Aorta (tissue), 5 donors: ENCODE measurements at regions of chr5 and their contacts with region 1.

Region 1: GRCh38 chr5:173573126-173573960 is 43.1 kb downstream of the BOD1 start:
- DNase-seq: peak; percentile 81 to 94
- ATAC-seq: peak; percentile 91
- H3K4me3 ChIP-seq: no peak overlapping the region
- H3K27ac ChIP-seq: no peak overlapping the region
- H3K4me1 ChIP-seq: no peaks in the 10 kb centered on the region
- H3K27me3 ChIP-seq: no peaks in the 10 kb centered on the region

Region 2: DNA sequence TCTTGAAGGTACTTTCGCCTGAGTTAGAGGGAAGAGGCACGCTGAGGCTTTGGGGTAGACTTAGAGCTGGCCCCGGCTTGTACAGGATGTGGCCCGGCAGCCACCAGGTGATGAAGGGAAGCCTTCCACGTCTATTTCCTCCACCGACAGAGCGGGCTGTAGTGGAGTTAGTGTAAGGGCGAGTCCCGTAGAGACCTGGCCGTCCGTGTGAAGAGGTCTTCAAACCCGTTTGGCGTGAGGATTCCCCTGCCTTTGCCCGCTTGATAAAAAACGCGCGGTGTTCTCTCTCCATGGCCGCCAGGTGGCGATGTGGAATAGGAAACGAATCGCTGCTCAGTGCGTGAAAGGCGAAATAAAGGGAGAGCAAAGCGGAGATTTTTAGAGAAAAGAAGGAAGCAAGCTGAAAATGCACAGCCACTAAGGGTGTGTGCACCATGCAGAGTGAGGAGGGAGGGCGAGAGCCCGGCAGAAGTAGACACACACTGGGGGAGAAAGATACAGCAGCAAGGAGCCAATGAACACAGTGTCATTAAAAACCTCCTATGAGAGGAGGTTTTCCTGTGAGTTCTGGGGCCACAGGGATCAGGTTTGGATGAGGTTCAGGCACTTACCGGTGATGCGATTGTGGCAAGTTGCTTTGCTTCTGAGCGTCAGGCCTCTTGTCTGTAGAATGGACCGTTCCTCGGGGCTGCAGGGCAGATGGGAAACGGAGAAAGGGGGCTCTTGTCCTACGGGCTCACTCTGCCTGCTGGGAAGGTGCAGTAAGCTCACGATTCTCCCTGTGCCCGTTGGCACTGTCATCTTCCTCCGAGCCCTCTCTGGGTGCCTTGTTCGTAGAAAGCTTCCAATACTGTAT is 279.3 kb before region 1 on chr5:
- intact Hi-C with region 1: loop called (anchors 2 kb)
- DNase-seq: peak; percentile 81 to 92
- ATAC-seq: peak; percentile 86
- H3K4me3 ChIP-seq: no peak overlapping the region
- H3K27ac ChIP-seq: no peak overlapping the region
- H3K4me1 ChIP-seq: no peaks in the 10 kb centered on the region
- H3K27me3 ChIP-seq: no peaks in the 10 kb centered on the region

Region 3: DNA sequence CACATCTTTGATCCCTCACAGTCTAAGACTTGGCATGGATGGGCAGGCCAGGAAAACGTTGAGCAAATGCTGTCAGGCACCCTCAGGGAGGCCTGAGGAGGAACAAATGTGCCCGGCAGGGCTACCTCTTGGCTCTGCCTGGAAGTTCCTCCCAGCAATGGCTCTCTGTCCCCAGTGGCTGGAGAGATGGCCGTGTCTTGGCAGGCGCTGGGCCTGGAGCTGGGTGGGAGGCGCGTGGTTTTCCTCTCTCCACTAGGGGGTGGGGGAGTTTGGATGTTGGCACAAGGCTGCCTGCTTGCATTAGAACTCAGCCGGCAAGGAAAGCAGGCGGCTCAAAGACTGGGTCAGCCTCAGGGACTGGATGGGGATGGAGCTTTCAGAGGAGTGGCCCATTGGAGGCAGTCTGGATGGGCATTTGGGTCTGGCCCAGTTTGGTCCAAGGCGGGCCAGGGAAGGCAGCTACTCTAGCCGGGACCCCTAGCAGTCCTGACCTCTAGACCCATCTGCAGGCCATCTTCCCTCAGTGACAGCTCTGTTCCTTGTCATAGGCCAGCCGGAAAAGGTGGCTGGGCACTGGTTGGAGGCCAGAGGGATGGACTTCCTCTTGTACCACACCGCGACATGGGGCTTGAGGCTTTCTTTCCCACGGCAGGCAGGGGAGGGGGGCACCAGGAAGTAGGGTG is 176.9 kb before region 1 on chr5:
- intact Hi-C with region 1: loop called in 1 of 2 experiments (anchors 10 kb)
- DNase-seq: no peak
- ATAC-seq: no peak
- H3K4me3 ChIP-seq: no peak overlapping the region
- H3K27ac ChIP-seq: no peak overlapping the region
- H3K4me1 ChIP-seq: peaks cover 0 to 3% of the 10 kb centered on the region in 2 donors
- H3K27me3 ChIP-seq: no peaks in the 10 kb centered on the region

Region 4: DNA sequence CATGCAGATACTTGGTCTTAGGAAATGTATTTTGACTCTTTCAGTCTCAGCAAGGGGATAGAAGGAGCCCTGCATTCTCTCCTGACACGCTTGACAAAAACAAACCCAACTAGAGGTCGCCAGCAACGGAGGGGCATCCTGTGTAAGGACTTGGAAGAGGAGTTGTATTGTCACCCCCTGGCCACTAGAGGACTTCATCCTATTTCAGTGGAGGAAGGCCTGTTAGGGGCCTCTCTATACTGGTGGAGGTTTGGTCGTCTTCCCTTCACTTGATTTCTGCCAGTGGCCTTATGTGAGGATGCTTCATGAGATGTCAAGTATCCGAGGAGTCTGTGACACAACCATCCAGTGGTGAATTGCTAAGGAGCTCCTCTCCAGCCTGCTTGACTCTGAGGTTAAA is 122.3 kb before region 1 on chr5:
- intact Hi-C with region 1: loop called in 1 of 2 experiments (anchors 2 kb)
- DNase-seq: no peak
- ATAC-seq: no peak
- H3K4me3 ChIP-seq: no peak overlapping the region
- H3K27ac ChIP-seq: no peak overlapping the region
- H3K4me1 ChIP-seq: no peaks in the 10 kb centered on the region
- H3K27me3 ChIP-seq: no peaks in the 10 kb centered on the region